CD4-positive, alpha-beta T cell (primary cell): ENCODE measurements at regions of chr1 and their contacts with region 1.

Region 1: GRCh38 chr1:2174348-2175054 is 20.1 kb downstream of the FAAP20 start:
- DNase-seq: peak in 8 of 14 experiments; percentile 19 to 68 (median 32)
- ATAC-seq: peak; percentile 70
- H3K4me3 ChIP-seq: peak overlapping the region; percentile 28
- H3K4me3 Mint-ChIP-seq: peak overlapping the region; percentile 60
- H3K27ac ChIP-seq: no peak overlapping the region
- H3K27ac Mint-ChIP-seq: no peak overlapping the region
- H3K4me1 ChIP-seq: peaks cover 10% of the 10 kb centered on the region
- H3K4me1 Mint-ChIP-seq: no peaks in the 10 kb centered on the region
- H3K27me3 ChIP-seq: no peaks in the 10 kb centered on the region
- H3K27me3 Mint-ChIP-seq: no peaks in the 10 kb centered on the region
- CTCF ChIP-seq: peak; percentile 79

Region 2: DNA sequence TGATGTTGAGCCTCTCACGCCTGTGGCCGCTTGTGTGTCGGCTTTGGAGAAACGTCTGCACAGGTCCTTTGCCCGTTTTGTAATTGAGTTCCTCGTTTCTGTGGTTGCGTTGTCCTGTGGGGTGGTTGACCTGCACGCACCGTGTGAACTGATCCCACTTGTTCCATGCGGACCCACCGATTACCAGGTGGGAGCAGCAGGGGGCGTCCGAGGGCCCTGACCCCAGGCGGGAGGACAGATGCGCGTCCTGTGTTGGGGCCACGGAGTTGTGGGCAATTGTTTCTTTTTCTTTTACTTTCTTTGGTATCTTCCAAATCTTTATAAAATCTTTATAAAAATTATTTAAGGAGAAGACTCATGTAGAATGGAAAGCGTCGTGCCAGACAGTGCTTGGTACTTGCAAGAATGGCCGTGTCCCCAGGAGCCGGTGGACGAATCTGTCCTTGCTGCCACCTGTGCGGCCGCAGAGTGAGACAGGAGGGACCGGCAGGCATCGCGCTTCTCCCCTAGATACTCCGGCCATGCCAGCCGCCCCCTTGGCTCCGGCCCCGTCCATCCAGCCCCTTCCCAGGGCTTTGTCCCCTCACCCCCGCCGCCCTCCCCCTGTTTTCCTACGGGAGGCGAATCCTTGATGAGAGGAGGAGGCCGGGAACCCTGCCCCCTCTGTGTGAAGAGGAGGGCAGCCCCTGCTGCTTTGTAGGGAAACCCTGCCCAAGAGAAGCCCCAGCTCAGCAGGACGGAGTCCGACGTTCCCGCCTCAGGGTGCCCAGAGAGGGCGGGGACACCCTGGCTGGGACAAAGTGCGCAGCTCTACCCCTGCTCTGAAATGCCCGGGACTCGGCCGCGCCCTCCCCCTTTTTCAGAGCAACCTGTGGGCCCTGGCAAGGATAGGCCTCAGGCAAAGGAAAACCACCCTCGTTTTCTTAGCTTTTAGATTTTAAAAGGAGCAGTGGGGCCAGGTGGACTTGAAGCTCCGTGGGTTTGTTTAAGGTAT is 82.6 kb before region 1 on chr1:
- CTCF ChIA-PET with region 1: no interaction called
- POLR2A ChIA-PET with region 1: no interaction called
- intact Hi-C with region 1: loop called in 1 of 2 experiments (anchors 1 kb)
- DNase-seq: peak; percentile 11 to 67 (median 36)
- ATAC-seq: peak; percentile 60
- H3K4me3 ChIP-seq: no peak overlapping the region
- H3K4me3 Mint-ChIP-seq: no peak overlapping the region
- H3K27ac ChIP-seq: no peak overlapping the region
- H3K27ac Mint-ChIP-seq: no peak overlapping the region
- H3K4me1 ChIP-seq: no peaks in the 10 kb centered on the region
- H3K4me1 Mint-ChIP-seq: no peaks in the 10 kb centered on the region
- H3K27me3 ChIP-seq: no peaks in the 10 kb centered on the region
- H3K27me3 Mint-ChIP-seq: no peaks in the 10 kb centered on the region
- CTCF ChIP-seq: peak; percentile 82

Region 3: GRCh38 chr1:2148691-2149090 is 25.8 kb before region 1 on chr1:
- CTCF ChIA-PET with region 1: interaction called, 10 read pairs
- POLR2A ChIA-PET with region 1: interaction called, 5 read pairs
- intact Hi-C with region 1: no loop called
- DNase-seq: peak in 13 of 14 experiments; percentile 37 to 92 (median 53)
- ATAC-seq: peak; percentile 61
- H3K4me3 ChIP-seq: peak overlapping the region; percentile 39
- H3K4me3 Mint-ChIP-seq: no peak overlapping the region
- H3K27ac ChIP-seq: peak overlapping the region; percentile 39 to 76
- H3K27ac Mint-ChIP-seq: no peak overlapping the region
- H3K4me1 ChIP-seq: peaks cover 56% of the 10 kb centered on the region
- H3K4me1 Mint-ChIP-seq: peaks cover 21% of the 10 kb centered on the region
- H3K27me3 ChIP-seq: no peaks in the 10 kb centered on the region
- H3K27me3 Mint-ChIP-seq: no peaks in the 10 kb centered on the region
- CTCF ChIP-seq: no peak